ENCODE measurements at regions of chr15 and their contacts with region 1.

Region 1: GRCh38 chr15:89129123-89129815 is 41.0 kb downstream of the ABHD2 start:
- DNase-seq: peak; percentile 66
- ATAC-seq: peak; percentile 66
- H3K4me3 ChIP-seq: no peak overlapping the region
- H3K4me3 Mint-ChIP-seq: no peak overlapping the region
- H3K27ac ChIP-seq: no peak overlapping the region
- H3K27ac Mint-ChIP-seq: no peak overlapping the region
- H3K4me1 ChIP-seq: peaks cover 4 to 15% of the 10 kb centered on the region in 2 donors
- H3K4me1 Mint-ChIP-seq: peaks cover 16% of the 10 kb centered on the region
- H3K27me3 ChIP-seq: no peaks in the 10 kb centered on the region
- H3K27me3 Mint-ChIP-seq: no peaks in the 10 kb centered on the region
- CTCF ChIP-seq: peak; percentile 86

Region 2: GRCh38 chr15:88904624-88905327 is 224.5 kb before region 1 on chr15:
- CTCF ChIA-PET with region 1: interaction called, 75 read pairs
- POLR2A ChIA-PET with region 1: no interaction called
- intact Hi-C with region 1: loop called (anchors 1 kb)
- DNase-seq: peak; percentile 83
- ATAC-seq: peak; percentile 88
- H3K4me3 ChIP-seq: no peak overlapping the region
- H3K4me3 Mint-ChIP-seq: no peak overlapping the region
- H3K27ac ChIP-seq: no peak overlapping the region
- H3K27ac Mint-ChIP-seq: no peak overlapping the region
- H3K4me1 ChIP-seq: peaks cover 3 to 8% of the 10 kb centered on the region in 2 donors
- H3K4me1 Mint-ChIP-seq: peaks cover 9% of the 10 kb centered on the region
- H3K27me3 ChIP-seq: no peaks in the 10 kb centered on the region
- H3K27me3 Mint-ChIP-seq: no peaks in the 10 kb centered on the region
- CTCF ChIP-seq: peak; percentile 99

Region 3: GRCh38 chr15:89087830-89088604 is 41.3 kb before region 1 on chr15 and contains the start of gene ABHD2:
- CTCF ChIA-PET with region 1: interaction called, 53 read pairs
- POLR2A ChIA-PET with region 1: interaction called, 6 read pairs
- intact Hi-C with region 1: loop called (anchors 2 kb)
- DNase-seq: peak; percentile 98
- ATAC-seq: peak; percentile 96
- H3K4me3 ChIP-seq: peak within 1 kb of the TSS; percentile 75 to 97 (median 93)
- H3K4me3 Mint-ChIP-seq: no peak within 1 kb of the TSS
- H3K27ac ChIP-seq: peak within 1 kb of the TSS; percentile 42 to 68
- H3K27ac Mint-ChIP-seq: no peak within 1 kb of the TSS
- H3K4me1 ChIP-seq: peaks cover 35 to 42% of the 10 kb centered on the region in 2 donors
- H3K4me1 Mint-ChIP-seq: peaks cover 30% of the 10 kb centered on the region
- H3K27me3 ChIP-seq: no peaks in the 10 kb centered on the region
- H3K27me3 Mint-ChIP-seq: no peaks in the 10 kb centered on the region
- CTCF ChIP-seq: no peak
- total RNA-seq, gene ABHD2: 40.9 and 45.8 TPM in 2 replicates

Region 4: GRCh38 chr15:89112341-89112971 is 16.8 kb before region 1 on chr15:
- CTCF ChIA-PET with region 1: interaction called, 30 read pairs
- POLR2A ChIA-PET with region 1: no interaction called
- intact Hi-C with region 1: no loop called
- DNase-seq: no peak
- ATAC-seq: no peak
- H3K4me3 ChIP-seq: no peak overlapping the region
- H3K4me3 Mint-ChIP-seq: no peak overlapping the region
- H3K27ac ChIP-seq: no peak overlapping the region
- H3K27ac Mint-ChIP-seq: no peak overlapping the region
- H3K4me1 ChIP-seq: no peaks in the 10 kb centered on the region
- H3K4me1 Mint-ChIP-seq: peaks cover 4% of the 10 kb centered on the region
- H3K27me3 ChIP-seq: no peaks in the 10 kb centered on the region
- H3K27me3 Mint-ChIP-seq: no peaks in the 10 kb centered on the region
- CTCF ChIP-seq: no peak